Endothelial cell of umbilical vein (primary cell): ENCODE measurements at regions of chr10 and their contacts with region 1.

Region 1: GRCh38 chr10:119028900-119029612 is 458 bp upstream of the NANOS1 start:
- DNase-seq: peak; percentile 87
- H3K4me3 ChIP-seq: peak overlapping the region in 1 of 3 experiments; percentile 37
- H3K27ac ChIP-seq: no peak overlapping the region
- H3K4me1 ChIP-seq: peaks cover 8% of the 10 kb centered on the region
- H3K27me3 ChIP-seq: no peaks in the 10 kb centered on the region
- CTCF ChIP-seq: peak; percentile 4 to 38
- POLR2A ChIP-seq: no peak

Region 2: DNA sequence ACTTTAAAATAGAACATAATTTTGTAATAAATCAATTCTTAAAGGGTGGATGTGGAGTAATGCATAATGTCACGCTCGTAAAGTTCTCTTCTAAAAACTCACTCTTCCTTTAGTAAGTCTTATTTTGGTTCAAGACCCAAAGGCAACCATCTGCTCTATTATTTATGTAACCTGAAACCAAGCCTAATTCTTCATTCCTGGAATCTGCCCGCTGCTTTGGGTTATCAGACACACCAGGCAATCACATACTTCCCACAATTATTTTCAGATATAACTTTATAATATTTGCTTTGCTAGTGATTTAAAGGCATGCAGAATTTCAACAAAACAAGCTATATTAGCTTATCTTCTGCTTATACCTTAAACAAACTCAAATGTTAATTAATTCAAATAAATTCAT is 1021.3 kb before region 1 on chr10:
- CTCF ChIA-PET with region 1: no interaction called
- POLR2A ChIA-PET with region 1: no interaction called
- dilution Hi-C with region 1: no loop called
- intact Hi-C with region 1: no loop called
- DNase-seq: peak; percentile 72
- H3K4me3 ChIP-seq: no peak overlapping the region
- H3K27ac ChIP-seq: no peak overlapping the region
- H3K4me1 ChIP-seq: no peaks in the 10 kb centered on the region
- H3K27me3 ChIP-seq: no peaks in the 10 kb centered on the region
- CTCF ChIP-seq: no peak
- POLR2A ChIP-seq: no peak

Region 3: DNA sequence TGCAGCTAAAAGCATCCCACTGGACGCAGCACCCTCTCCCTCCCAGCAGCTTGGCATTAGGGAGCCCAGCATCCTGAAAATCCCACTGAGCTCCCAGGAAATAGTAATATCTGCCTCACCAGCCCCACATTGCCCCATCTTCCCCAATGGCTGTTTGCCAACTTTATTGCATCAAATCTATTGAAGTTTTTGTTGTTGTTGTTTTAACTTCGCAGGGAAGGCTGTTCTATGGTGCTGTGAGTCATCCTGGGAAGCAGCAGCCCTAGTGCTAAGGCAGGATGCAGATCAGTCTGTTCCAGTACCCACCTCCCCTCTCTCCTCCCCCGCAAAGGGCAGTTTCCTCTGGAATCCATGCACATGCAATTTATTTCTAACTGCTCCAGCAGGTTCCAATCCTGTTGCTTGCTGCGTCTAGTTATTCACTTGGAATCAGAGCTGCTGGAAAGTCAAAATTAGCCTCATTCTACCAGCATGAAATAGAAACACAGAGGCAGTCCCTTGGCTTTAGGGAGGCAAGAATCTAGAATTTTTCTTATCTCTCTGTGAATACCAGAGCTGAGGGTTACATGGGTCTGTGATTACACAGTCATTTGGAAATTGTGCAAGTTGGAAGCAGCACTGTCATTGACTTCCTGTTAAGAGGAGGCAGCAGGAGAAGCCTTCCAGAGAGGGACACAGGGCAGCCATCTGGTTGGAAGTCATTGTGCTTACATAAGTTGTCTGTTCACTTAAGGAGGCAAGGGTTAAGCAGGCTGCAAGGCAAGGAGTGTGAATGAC is 158.4 kb before region 1 on chr10:
- CTCF ChIA-PET with region 1: no interaction called
- POLR2A ChIA-PET with region 1: no interaction called
- dilution Hi-C with region 1: no loop called
- intact Hi-C with region 1: loop called (anchors 5 kb)
- DNase-seq: peak; percentile 70
- H3K4me3 ChIP-seq: no peak overlapping the region
- H3K27ac ChIP-seq: no peak overlapping the region
- H3K4me1 ChIP-seq: peaks cover 10% of the 10 kb centered on the region
- H3K27me3 ChIP-seq: peaks cover 3% of the 10 kb centered on the region in 2 experiments
- CTCF ChIP-seq: no peak
- POLR2A ChIP-seq: no peak

Region 4: GRCh38 chr10:119149723-119150122 is 120.7 kb after region 1 on chr10:
- CTCF ChIA-PET with region 1: no interaction called
- POLR2A ChIA-PET with region 1: no interaction called
- dilution Hi-C with region 1: no loop called
- intact Hi-C with region 1: no loop called
- DNase-seq: no peak
- H3K4me3 ChIP-seq: no peak overlapping the region
- H3K27ac ChIP-seq: no peak overlapping the region
- H3K4me1 ChIP-seq: no peaks in the 10 kb centered on the region
- H3K27me3 ChIP-seq: no peaks in the 10 kb centered on the region
- CTCF ChIP-seq: no peak
- POLR2A ChIP-seq: no peak

Region 5: GRCh38 chr10:119608316-119609155 is 579.5 kb after region 1 on chr10:
- CTCF ChIA-PET with region 1: no interaction called
- POLR2A ChIA-PET with region 1: no interaction called
- dilution Hi-C with region 1: no loop called
- intact Hi-C with region 1: no loop called
- DNase-seq: peak; percentile 42
- H3K4me3 ChIP-seq: no peak overlapping the region
- H3K27ac ChIP-seq: no peak overlapping the region
- H3K4me1 ChIP-seq: no peaks in the 10 kb centered on the region
- H3K27me3 ChIP-seq: no peaks in the 10 kb centered on the region
- CTCF ChIP-seq: peak; percentile 66 to 68
- POLR2A ChIP-seq: no peak